Activated naive CD4-positive, alpha-beta T cell treated with anti-CD3 and anti-CD28 coated beads, Interleukin-2, amount 10 ng/mL, durations not matched to agents 7 days and 5 days (primary cell): ENCODE measurements at regions of chr16 and their contacts with region 1.

Region 1: GRCh38 chr16:46853713-46854443 is 22.9 kb upstream of the C16orf87 start:
- DNase-seq: peak; percentile 81
- H3K4me3 Mint-ChIP-seq: no peak overlapping the region
- H3K27ac Mint-ChIP-seq: no peak overlapping the region
- H3K4me1 Mint-ChIP-seq: no peaks in the 10 kb centered on the region
- H3K27me3 Mint-ChIP-seq: peaks cover 14% of the 10 kb centered on the region

Region 2: DNA sequence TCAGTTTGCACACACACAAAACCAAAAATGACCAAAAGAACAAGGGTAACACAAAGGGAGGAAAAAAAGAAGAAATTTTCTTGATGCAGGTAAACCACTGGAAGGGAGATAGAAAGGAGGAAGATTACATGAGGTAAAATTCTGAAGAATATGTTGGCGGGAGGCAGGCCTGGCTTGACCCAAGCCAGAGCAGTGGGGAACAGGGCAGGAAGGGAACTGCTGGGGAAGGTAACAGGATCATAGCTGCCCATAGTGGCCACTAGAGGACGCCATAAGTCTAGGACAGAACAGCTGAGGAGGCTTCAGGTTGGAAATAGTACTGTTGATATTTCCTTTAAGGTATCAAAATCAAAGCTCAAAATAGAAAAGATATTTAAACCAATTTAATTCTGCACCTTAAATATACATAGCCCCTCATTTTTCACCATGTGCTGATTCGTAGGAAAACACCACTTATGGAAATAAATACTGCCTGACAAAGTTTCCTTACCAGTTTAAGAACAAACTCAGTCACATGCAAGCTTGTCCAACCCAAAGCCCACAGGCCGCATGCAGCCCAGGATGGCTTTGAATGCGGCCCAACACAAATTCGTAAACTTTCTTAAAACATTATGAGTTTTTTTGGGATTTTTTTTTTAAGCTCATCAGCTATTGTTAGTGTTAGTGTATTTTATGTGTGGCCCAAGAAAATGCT is 180.4 kb before region 1 on chr16:
- CTCF ChIA-PET with region 1: interaction called, 10 read pairs
- DNase-seq: peak; percentile 66
- H3K4me3 Mint-ChIP-seq: no peak overlapping the region
- H3K27ac Mint-ChIP-seq: no peak overlapping the region
- H3K4me1 Mint-ChIP-seq: no peaks in the 10 kb centered on the region
- H3K27me3 Mint-ChIP-seq: no peaks in the 10 kb centered on the region

Region 3: GRCh38 chr16:46899443-46900143 is 45.7 kb after region 1 on chr16:
- CTCF ChIA-PET with region 1: interaction called, 127 read pairs
- DNase-seq: no peak
- H3K4me3 Mint-ChIP-seq: no peak overlapping the region
- H3K27ac Mint-ChIP-seq: no peak overlapping the region
- H3K4me1 Mint-ChIP-seq: no peaks in the 10 kb centered on the region
- H3K27me3 Mint-ChIP-seq: no peaks in the 10 kb centered on the region

Region 4: GRCh38 chr16:46908540-46909372 is 54.9 kb after region 1 on chr16:
- CTCF ChIA-PET with region 1: interaction called, 127 read pairs
- DNase-seq: peak; percentile 75
- H3K4me3 Mint-ChIP-seq: no peak overlapping the region
- H3K27ac Mint-ChIP-seq: no peak overlapping the region
- H3K4me1 Mint-ChIP-seq: peaks cover 13% of the 10 kb centered on the region
- H3K27me3 Mint-ChIP-seq: no peaks in the 10 kb centered on the region

Region 5: GRCh38 chr16:46918861-46919792 is 65.2 kb after region 1 on chr16:
- CTCF ChIA-PET with region 1: interaction called, 15 read pairs
- DNase-seq: no peak
- H3K4me3 Mint-ChIP-seq: no peak overlapping the region
- H3K27ac Mint-ChIP-seq: no peak overlapping the region
- H3K4me1 Mint-ChIP-seq: no peaks in the 10 kb centered on the region
- H3K27me3 Mint-ChIP-seq: no peaks in the 10 kb centered on the region

Region 6: GRCh38 chr16:46929378-46930332 is 75.8 kb after region 1 on chr16:
- CTCF ChIA-PET with region 1: interaction called, 26 read pairs
- DNase-seq: peak; percentile 76
- H3K4me3 Mint-ChIP-seq: no peak overlapping the region
- H3K27ac Mint-ChIP-seq: no peak overlapping the region
- H3K4me1 Mint-ChIP-seq: no peaks in the 10 kb centered on the region
- H3K27me3 Mint-ChIP-seq: no peaks in the 10 kb centered on the region

Region 7: GRCh38 chr16:48164907-48165726 is 1311.2 kb after region 1 on chr16:
- CTCF ChIA-PET with region 1: interaction called, 11 read pairs
- DNase-seq: peak; percentile 74
- H3K4me3 Mint-ChIP-seq: no peak overlapping the region
- H3K27ac Mint-ChIP-seq: no peak overlapping the region
- H3K4me1 Mint-ChIP-seq: peaks cover 7% of the 10 kb centered on the region
- H3K27me3 Mint-ChIP-seq: peaks cover 14% of the 10 kb centered on the region